Endothelial cell of umbilical vein (primary cell): ENCODE measurements at regions of chr2 and their contacts with region 1.

Region 1: DNA sequence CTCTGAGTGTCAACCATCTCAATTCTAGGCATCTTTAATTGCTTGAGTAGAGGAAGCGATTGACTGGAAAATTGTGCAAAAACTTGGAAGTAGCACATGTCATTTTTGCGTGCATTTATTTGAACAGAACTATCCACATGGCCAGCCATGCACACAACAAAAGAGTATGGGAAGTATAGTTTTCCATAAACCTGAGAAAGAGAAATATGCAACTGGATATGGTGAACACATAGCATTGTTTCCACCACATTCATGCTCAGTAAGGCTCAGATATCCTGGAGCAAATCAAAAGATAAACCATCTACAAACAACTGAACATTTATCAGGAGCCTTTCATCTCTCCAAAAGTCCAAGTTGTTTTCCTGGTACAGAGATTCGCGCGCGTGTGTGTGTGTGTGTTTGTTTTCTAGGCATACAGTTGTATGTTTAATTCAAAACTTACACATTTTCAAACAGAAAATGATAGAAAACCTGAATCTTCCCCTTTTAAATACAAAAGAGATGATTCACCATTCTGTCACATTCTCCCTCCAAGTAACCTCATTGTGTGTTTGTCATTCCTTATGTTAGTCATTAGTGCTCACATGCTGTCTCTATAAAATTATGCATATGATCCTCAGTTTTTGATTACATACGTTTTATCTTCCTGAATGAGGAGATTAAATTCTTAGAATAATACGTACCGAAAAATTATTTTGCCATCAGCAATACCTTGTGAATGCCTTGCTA is 780.4 kb upstream of the NRXN1 start:
- DNase-seq: peak; percentile 30
- H3K4me3 ChIP-seq: no peak overlapping the region
- H3K27ac ChIP-seq: peak overlapping the region; percentile 37
- H3K4me1 ChIP-seq: peaks cover 24% of the 10 kb centered on the region
- H3K27me3 ChIP-seq: no peaks in the 10 kb centered on the region
- CTCF ChIP-seq: no peak
- POLR2A ChIP-seq: no peak

Region 2: DNA sequence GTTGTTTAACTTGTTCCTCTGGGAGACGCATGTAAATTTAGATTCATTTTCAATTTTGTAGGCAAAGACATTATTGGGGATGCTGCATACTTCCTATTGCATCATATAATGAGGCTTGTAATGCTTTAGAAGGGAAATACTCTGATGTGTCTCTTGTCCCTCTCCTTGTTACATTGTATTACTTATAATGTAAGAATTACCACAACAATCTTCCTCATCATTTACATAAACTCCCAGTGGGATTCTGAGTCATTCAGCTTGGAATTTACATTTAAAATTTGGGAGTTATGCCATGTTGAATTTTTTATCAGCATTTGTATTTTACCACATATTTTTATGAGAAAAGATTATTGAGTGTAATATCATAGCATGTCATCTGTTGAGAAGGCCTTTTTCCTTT is 183.0 kb after region 1 on chr2:
- CTCF ChIA-PET with region 1: no interaction called
- POLR2A ChIA-PET with region 1: no interaction called
- dilution Hi-C with region 1: no loop called
- intact Hi-C with region 1: loop called (anchors 2 kb)
- DNase-seq: peak; percentile 3
- H3K4me3 ChIP-seq: no peak overlapping the region
- H3K27ac ChIP-seq: peak overlapping the region; percentile 80
- H3K4me1 ChIP-seq: peaks cover 23% of the 10 kb centered on the region
- H3K27me3 ChIP-seq: no peaks in the 10 kb centered on the region
- CTCF ChIP-seq: no peak
- POLR2A ChIP-seq: no peak